Activated CD4-positive, alpha-beta T cell treated with anti-CD3 and anti-CD28 coated beads, Interleukin-2, amount 10 ng/mL, durations not matched to agents 24 days and 14 days (primary cell): ENCODE measurements at regions of chr17 and their contacts with region 1.

Region 1: DNA sequence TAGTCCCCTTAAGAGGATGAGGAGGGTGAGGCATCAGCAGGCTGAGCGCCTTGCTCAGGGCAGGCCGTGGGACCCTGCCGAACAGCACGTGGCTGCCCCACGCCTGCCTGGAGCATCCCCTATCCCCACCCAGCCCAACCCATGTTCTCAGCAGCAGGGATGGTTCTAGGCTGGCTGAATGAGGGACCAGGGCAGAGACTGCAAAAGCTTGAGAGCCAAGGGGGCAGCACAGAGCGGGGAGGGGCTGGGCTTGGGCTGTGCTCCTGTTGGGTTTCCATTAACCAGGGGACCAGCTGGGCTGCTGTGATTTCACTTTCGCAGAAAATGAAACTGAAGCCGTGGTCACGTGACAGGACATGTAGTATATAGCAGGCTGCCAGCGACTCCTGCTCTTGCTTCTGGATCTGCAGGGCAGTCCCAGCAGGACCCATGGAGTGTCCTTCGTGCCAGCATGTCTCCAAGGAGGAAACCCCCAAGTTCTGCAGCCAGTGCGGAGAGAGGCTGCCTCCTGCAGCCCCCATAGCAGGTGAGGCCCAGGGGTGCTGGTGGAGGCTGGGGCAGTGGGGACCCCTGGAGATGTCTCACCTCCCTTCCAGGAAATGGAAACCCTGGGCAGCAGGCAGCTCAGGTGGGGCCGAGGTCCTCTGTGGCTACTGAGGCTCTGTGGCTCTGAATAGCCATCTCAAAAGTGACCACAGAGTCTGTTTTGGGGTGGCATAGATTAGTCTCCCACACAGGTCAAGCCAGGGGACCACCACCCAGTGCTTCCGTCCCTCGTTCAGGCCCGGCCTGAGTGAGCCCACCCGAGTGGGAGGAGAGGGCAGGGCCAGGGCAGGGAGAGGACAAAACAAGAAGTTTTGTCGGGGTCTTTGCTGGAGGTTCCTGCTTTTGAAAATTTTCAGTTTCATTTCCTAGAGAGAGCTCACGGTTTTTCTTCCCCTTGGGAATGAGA is 2.9 kb downstream of the RNF213 start:
- DNase-seq: peak; percentile 97
- H3K4me3 Mint-ChIP-seq: peak overlapping the region; percentile 99
- H3K27ac Mint-ChIP-seq: peak overlapping the region; percentile 97
- H3K4me1 Mint-ChIP-seq: peaks cover 45% of the 10 kb centered on the region
- H3K27me3 Mint-ChIP-seq: no peaks in the 10 kb centered on the region

Region 2: DNA sequence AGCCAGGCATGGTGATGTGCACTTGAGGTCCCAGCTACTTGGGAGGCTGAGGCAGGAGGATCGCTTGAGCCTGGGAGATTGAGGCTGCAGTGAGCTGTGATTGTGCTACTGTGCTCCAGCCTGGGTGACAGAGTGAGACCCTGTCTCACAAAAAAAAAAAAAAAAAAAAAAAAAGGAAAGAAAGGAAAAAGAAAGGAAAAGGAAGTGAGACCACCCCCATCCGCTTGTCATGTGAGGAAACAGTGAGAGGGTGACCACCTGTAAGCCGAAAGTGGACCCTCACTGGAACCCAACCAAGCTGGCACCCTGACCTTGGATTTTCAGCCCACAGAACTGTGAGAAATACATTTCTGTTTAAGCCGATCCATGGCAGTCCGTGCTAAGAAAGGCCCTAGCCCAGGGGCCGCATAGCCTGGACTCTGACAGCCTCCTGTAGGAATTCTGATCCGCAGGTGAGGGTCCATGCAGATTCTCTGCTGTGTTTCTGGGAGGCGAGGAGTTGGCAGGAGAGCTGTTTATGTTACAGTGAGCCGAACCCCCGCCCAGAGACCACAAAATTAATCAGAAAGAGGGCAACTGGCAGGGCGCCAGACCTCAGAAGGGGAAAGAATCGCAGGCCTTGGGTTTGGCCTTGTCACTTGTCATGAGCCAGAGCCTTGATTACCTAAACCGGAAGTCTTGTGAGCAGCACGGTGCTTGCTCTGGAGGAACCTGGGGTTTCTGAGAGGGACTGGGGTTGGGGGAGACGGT is 44.3 kb before region 1 on chr17:
- intact Hi-C with region 1: loop called (anchors 2 kb)
- DNase-seq: peak; percentile 94
- H3K4me3 Mint-ChIP-seq: peak overlapping the region; percentile 93
- H3K27ac Mint-ChIP-seq: peak overlapping the region; percentile 91
- H3K4me1 Mint-ChIP-seq: peaks cover 11% of the 10 kb centered on the region
- H3K27me3 Mint-ChIP-seq: peaks cover 2% of the 10 kb centered on the region